Heart left ventricle (tissue), 16 donors: ENCODE measurements at regions of chr6 and their contacts with region 1.

Region 1: DNA sequence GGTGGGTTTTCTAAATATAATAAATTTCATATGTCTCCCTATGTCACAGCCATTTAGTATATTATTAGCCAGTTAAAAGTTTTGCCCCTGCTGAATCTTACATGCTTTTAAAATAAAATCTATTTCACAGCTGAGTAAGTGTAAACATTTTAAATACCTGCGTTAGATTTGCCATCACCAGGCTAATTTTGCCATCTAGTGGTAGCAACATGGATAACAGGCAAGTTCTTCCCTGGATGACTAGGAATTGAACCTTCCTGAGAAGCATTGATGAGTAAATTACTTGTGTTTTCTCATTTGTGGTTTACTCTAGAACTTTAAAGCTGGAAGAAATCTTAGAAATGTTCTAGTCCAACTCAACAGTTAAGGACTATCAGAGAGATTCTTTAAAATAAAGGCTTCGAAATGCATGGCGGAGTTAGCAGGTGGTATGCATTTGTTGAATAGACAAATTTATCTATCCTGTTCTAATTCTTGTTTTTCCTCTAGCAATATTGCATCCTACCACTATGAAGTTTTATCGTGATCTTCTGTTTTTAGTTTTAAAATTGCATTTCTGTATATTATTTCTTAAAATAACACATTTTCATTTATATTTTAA is 2.6 kb downstream of the PRSS35 start:
- DNase-seq: no peak
- ATAC-seq: peak in 1 of 4 donors; percentile 47
- H3K4me3 ChIP-seq: no peak overlapping the region
- H3K27ac ChIP-seq: no peak overlapping the region
- H3K4me1 ChIP-seq: peaks cover 0 to 13% (median 5%) of the 10 kb centered on the region in 12 donors
- H3K27me3 ChIP-seq: peaks cover 0 to 26% (median 0%) of the 10 kb centered on the region in 9 donors
- CTCF ChIP-seq: peak; percentile 60 to 89 (median 76)
- POLR2A ChIP-seq: no peak

Region 2: GRCh38 chr6:83221889-83222479 is 293.0 kb before region 1 on chr6:
- intact Hi-C with region 1: loop called (anchors 1 to 2 kb)
- DNase-seq: no peak
- ATAC-seq: no peak
- H3K4me3 ChIP-seq: no peak overlapping the region
- H3K27ac ChIP-seq: no peak overlapping the region
- H3K4me1 ChIP-seq: no peaks in the 10 kb centered on the region
- H3K27me3 ChIP-seq: no peaks in the 10 kb centered on the region
- CTCF ChIP-seq: peak in 11 of 12 donors; percentile 36 to 69 (median 59)
- POLR2A ChIP-seq: no peak

Region 3: GRCh38 chr6:83417880-83418663 is 96.9 kb before region 1 on chr6:
- intact Hi-C with region 1: loop called (anchors 1 to 5 kb)
- DNase-seq: no peak
- ATAC-seq: no peak
- H3K4me3 ChIP-seq: no peak overlapping the region
- H3K27ac ChIP-seq: no peak overlapping the region
- H3K4me1 ChIP-seq: peaks cover 0 to 4% (median 0%) of the 10 kb centered on the region in 12 donors
- H3K27me3 ChIP-seq: no peaks in the 10 kb centered on the region
- CTCF ChIP-seq: peak; percentile 18 to 55 (median 46)
- POLR2A ChIP-seq: no peak

Region 4: GRCh38 chr6:83430611-83431563 is 84.1 kb before region 1 on chr6 and contains the start of gene ME1:
- intact Hi-C with region 1: loop called in 1 of 10 experiments (anchors 5 kb)
- DNase-seq: peak; percentile 77 to 90 (median 88)
- ATAC-seq: peak; percentile 80 to 98 (median 94)
- H3K4me3 ChIP-seq: peak within 1 kb of the TSS; percentile 51 to 88 (median 68)
- H3K27ac ChIP-seq: peak within 1 kb of the TSS in 11 of 12 donors; percentile 51 to 81 (median 71)
- H3K4me1 ChIP-seq: peaks cover 0 to 15% (median 6%) of the 10 kb centered on the region in 12 donors
- H3K27me3 ChIP-seq: no peaks in the 10 kb centered on the region
- CTCF ChIP-seq: peak in 1 of 12 donors; percentile 18
- POLR2A ChIP-seq: peak in 1 of 2 donors; percentile 50
- total RNA-seq, gene ME1: 15.2 to 28.5 (median 19.6) TPM

Region 5: DNA sequence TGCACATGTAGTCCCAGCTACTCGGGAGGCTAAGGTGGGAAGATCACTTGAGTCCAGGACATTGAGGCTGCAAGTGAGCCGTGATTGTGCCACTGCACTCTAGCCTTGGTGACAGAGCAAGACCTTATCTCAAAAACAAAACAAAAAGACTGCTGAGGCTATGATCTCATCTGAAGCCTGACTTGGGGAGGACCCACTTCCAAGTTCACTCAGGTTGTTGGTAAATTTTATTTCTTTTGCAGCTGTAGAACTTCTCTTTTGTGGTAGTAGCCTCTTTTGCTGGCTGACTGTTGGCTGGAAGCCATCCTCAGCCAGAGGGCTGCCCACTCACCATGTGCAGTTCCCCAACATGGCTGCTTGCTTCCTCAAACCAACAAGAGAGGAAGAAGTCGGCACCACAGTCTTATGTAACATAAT is 47.3 kb before region 1 on chr6:
- intact Hi-C with region 1: loop called in 1 of 10 experiments (anchors 2 kb)
- DNase-seq: peak; percentile 31 to 68 (median 53)
- ATAC-seq: peak in 3 of 4 donors; percentile 51 to 81 (median 62)
- H3K4me3 ChIP-seq: no peak overlapping the region
- H3K27ac ChIP-seq: peak overlapping the region in 1 of 12 donors; percentile 86
- H3K4me1 ChIP-seq: peaks cover 0 to 76% (median 0%) of the 10 kb centered on the region in 12 donors
- H3K27me3 ChIP-seq: no peaks in the 10 kb centered on the region
- CTCF ChIP-seq: no peak
- POLR2A ChIP-seq: no peak